Heart right ventricle (tissue), 16 donors: ENCODE measurements at regions of chr12 and their contacts with region 1.

Region 1: DNA sequence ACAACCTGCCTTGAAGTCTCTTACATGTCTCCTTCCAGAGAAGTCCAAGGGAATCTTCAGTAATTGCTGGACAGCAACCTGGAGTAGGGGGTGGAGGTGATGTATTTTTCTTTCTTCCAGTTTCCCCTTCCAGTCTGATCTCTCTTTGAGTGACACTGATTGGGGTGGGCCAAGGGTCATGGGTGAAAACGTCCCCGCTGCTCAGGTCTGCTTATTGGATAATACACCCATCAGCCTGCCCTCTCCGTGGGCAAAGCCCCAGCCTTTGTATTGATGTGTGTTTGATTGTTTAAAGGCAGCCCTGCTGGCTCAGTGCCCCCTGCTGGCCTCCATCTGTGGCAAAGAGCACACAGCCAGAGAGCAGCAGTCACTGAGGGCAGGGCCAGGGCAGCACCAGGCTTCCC is 35.7 kb upstream of the ATP2A2 start:
- DNase-seq: peak in 1 of 2 donors; percentile 67
- ATAC-seq: peak in 3 of 8 donors; percentile 14 to 68 (median 30)
- H3K4me3 ChIP-seq: no peak overlapping the region
- H3K27ac ChIP-seq: peak overlapping the region; percentile 28 to 94 (median 88)
- H3K4me1 ChIP-seq: peaks cover 19 to 63% (median 39%) of the 10 kb centered on the region in 9 donors
- H3K27me3 ChIP-seq: no peaks in the 10 kb centered on the region
- CTCF ChIP-seq: peak in 6 of 9 donors; percentile 15 to 56 (median 30)

Region 2: GRCh38 chr12:110109037-110109836 is 136.1 kb before region 1 on chr12:
- intact Hi-C with region 1: loop called in 1 of 10 experiments (anchors 2 kb)
- DNase-seq: peak; percentile 60 to 69
- ATAC-seq: peak; percentile 70 to 91 (median 82)
- H3K4me3 ChIP-seq: no peak overlapping the region
- H3K27ac ChIP-seq: peak overlapping the region; percentile 64 to 88 (median 80)
- H3K4me1 ChIP-seq: peaks cover 8 to 45% (median 32%) of the 10 kb centered on the region in 9 donors
- H3K27me3 ChIP-seq: no peaks in the 10 kb centered on the region
- CTCF ChIP-seq: no peak